ENCODE measurements at regions of chr9 and their contacts with region 1.

Region 1: GRCh38 chr9:19379697-19380046 is 364 bp downstream of the RPS6 start:
- DNase-seq: peak in 1 of 2 donors; percentile 72
- ATAC-seq: peak; percentile 41 to 58 (median 50)
- H3K4me3 ChIP-seq: peak overlapping the region; percentile 72
- H3K4me3 Mint-ChIP-seq: peak overlapping the region; percentile 96
- H3K27ac ChIP-seq: peak overlapping the region; percentile 88
- H3K27ac Mint-ChIP-seq: peak overlapping the region; percentile 93 to 99
- H3K4me1 ChIP-seq: peaks cover 17% of the 10 kb centered on the region
- H3K4me1 Mint-ChIP-seq: peaks cover 36 to 46% of the 10 kb centered on the region in 2 donors
- H3K27me3 ChIP-seq: no peaks in the 10 kb centered on the region
- H3K27me3 Mint-ChIP-seq: no peaks in the 10 kb centered on the region
- CTCF ChIP-seq: no peak

Region 2: DNA sequence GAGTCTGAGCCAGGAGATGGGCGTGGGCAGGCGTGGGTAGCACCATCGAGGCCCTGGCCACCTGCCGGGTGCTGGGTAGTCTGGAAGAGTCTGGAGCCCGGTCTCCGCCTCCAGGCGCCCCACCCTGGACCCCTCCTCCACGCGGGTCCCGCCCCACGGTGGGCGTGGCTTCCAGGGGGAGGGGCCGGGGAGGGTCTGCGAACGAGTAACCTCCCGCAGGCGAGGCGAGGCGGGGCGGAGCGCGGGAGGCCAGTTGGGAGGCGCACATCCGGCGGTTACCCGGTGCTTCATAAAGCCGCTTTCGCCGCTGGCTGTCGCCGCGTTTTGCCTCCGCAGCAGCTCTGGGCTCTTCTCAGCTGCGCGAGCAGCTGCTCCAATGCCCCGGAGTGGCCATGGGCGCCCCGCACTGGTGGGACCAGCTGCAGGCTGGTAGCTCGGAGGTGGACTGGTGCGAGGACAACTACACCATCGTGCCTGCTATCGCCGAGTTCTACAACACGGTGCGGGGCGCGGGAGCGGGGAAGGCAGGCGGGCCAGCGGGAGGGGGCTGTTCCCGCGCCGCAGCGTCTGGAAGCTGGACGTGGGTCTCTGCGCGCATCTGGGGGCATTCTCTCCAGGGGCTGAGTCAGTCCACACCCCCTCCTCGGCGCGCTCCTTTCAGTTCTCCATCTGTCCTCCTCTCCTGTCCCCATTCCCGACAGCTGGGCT is 29.2 kb after region 1 on chr9 and contains the start of gene ACER2:
- intact Hi-C with region 1: loop called (anchors 1 kb)
- DNase-seq: peak; percentile 81 to 95
- ATAC-seq: peak; percentile 95 to 96 (median 96)
- H3K4me3 ChIP-seq: peak within 1 kb of the TSS; percentile 89
- H3K4me3 Mint-ChIP-seq: peak within 1 kb of the TSS; percentile 98
- H3K27ac ChIP-seq: peak within 1 kb of the TSS; percentile 27
- H3K27ac Mint-ChIP-seq: peak within 1 kb of the TSS; percentile 67 to 87
- H3K4me1 ChIP-seq: peaks cover 18% of the 10 kb centered on the region
- H3K4me1 Mint-ChIP-seq: peaks cover 10 to 18% of the 10 kb centered on the region in 2 donors
- H3K27me3 ChIP-seq: no peaks in the 10 kb centered on the region
- H3K27me3 Mint-ChIP-seq: peaks cover 0 to 2% of the 10 kb centered on the region in 2 donors
- CTCF ChIP-seq: no peak
- total RNA-seq, gene ACER2: 0.61 to 1.3 (median 1.2) TPM

Measured in natural killer cell (primary cell).